WTC11 (cell line): ENCODE measurements at regions of chr1 and their contacts with region 1.

Region 1: GRCh38 chr1:78004719-78005447 is at the start of gene DNAJB4:
- DNase-seq: no peak
- ATAC-seq: peak; percentile 91
- H3K4me3 Mint-ChIP-seq: peak within 1 kb of the TSS; percentile 70
- H3K27ac Mint-ChIP-seq: peak within 1 kb of the TSS; percentile 96
- H3K4me1 Mint-ChIP-seq: peaks cover 40% of the 10 kb centered on the region
- H3K27me3 Mint-ChIP-seq: no peaks in the 10 kb centered on the region
- CTCF ChIP-seq: no peak
- total RNA-seq, gene DNAJB4: 23.4 to 26.5 TPM (median 26.0 TPM) in 3 replicates

Region 2: GRCh38 chr1:77978969-77979876 is 25.7 kb before region 1 on chr1 and contains the start of gene FUBP1:
- CTCF ChIA-PET with region 1: interaction called, 3 read pairs
- POLR2A ChIA-PET with region 1: interaction called, 15 read pairs
- DNase-seq: peak; percentile 95
- ATAC-seq: peak; percentile 92
- H3K4me3 Mint-ChIP-seq: no peak within 1 kb of the TSS
- H3K27ac Mint-ChIP-seq: no peak within 1 kb of the TSS
- H3K4me1 Mint-ChIP-seq: peaks cover 54% of the 10 kb centered on the region
- H3K27me3 Mint-ChIP-seq: no peaks in the 10 kb centered on the region
- CTCF ChIP-seq: 0 out of 2 replicates have a peak, but pooled peaks have one; percentile 19
- total RNA-seq, gene FUBP1: 175 to 208 TPM (median 176 TPM) in 3 replicates

Region 3: DNA sequence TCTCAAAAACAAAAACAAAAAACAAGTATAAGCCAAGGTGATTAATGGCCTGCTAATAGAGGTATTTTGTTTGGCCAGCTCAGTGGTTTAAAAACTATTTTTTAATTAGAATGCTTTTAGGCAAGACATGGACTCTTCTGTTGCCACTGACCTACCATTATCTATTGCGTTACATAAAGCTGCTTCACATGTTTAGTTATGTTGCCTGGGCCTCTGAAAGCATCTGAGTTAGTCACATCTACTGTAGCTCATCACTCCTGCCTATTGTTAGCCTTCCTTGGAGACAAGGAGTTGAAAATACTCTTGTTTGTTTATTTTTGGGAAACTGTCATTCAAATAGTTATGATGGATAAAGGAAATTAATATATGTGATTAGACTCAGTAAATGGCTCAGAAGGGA is 14.1 kb after region 1 on chr1:
- CTCF ChIA-PET with region 1: no interaction called
- POLR2A ChIA-PET with region 1: no interaction called
- DNase-seq: no peak
- ATAC-seq: no peak
- H3K4me3 Mint-ChIP-seq: no peak overlapping the region
- H3K27ac Mint-ChIP-seq: no peak overlapping the region; the same call in 1 of the 2 replicates
- H3K4me1 Mint-ChIP-seq: no peaks in the 10 kb centered on the region
- H3K27me3 Mint-ChIP-seq: no peaks in the 10 kb centered on the region
- CTCF ChIP-seq: no peak

Region 4: DNA sequence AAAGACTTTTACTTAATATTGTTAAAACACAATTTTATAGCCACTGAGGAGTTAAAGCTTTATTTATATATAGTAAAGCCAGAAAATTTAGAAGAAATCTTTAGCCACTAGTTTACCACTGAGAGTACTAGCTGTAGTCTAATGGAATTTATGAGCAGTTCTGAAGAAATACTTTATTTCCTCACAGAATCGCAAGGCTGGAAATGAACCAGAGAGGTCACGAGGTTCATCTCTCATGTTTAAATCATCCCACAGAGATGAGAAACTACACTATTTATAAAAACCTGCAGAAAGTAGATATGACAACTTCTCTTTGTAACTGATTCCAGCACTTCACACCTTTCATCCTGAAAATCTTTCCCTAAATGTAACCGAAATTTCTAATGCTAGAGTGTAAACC is 975.6 kb after region 1 on chr1:
- CTCF ChIA-PET with region 1: no interaction called
- POLR2A ChIA-PET with region 1: no interaction called
- DNase-seq: no peak
- ATAC-seq: no peak
- H3K4me3 Mint-ChIP-seq: no peak overlapping the region
- H3K27ac Mint-ChIP-seq: no peak overlapping the region
- H3K4me1 Mint-ChIP-seq: no peaks in the 10 kb centered on the region
- H3K27me3 Mint-ChIP-seq: no peaks in the 10 kb centered on the region
- CTCF ChIP-seq: no peak